Caco-2 (cell line): ENCODE measurements at regions of chr3 and their contacts with region 1.

Region 1: GRCh38 chr3:59049671-59050331 is at the start of gene CFAP20DC:
- DNase-seq: peak; percentile 92 to 93
- H3K4me3 ChIP-seq: peak within 1 kb of the TSS; percentile 74
- H3K4me3 Mint-ChIP-seq: peak within 1 kb of the TSS; percentile 54
- H3K27ac Mint-ChIP-seq: peak within 1 kb of the TSS; percentile 55
- H3K4me1 ChIP-seq: peaks cover 5% of the 10 kb centered on the region
- H3K4me1 Mint-ChIP-seq: no peaks in the 10 kb centered on the region
- H3K27me3 ChIP-seq: no peaks in the 10 kb centered on the region; the same call in 1 of the 2 replicates
- H3K27me3 Mint-ChIP-seq: no peaks in the 10 kb centered on the region
- CTCF ChIP-seq: no peak
- total RNA-seq, gene CFAP20DC: 2.2 and 2.8 TPM in 2 replicates

Region 2: GRCh38 chr3:58560771-58561311 is 489.0 kb before region 1 on chr3:
- CTCF ChIA-PET with region 1: no interaction called
- POLR2A ChIA-PET with region 1: no interaction called
- intact Hi-C with region 1: loop called (anchors 5 kb)
- DNase-seq: peak; percentile 86
- H3K4me3 ChIP-seq: no peak overlapping the region
- H3K4me3 Mint-ChIP-seq: peak overlapping the region; percentile 33
- H3K27ac Mint-ChIP-seq: peak overlapping the region; percentile 91
- H3K4me1 ChIP-seq: peaks cover 42% of the 10 kb centered on the region
- H3K4me1 Mint-ChIP-seq: peaks cover 38% of the 10 kb centered on the region
- H3K27me3 ChIP-seq: no peaks in the 10 kb centered on the region
- H3K27me3 Mint-ChIP-seq: no peaks in the 10 kb centered on the region
- CTCF ChIP-seq: peak; percentile 43 to 51

Region 3: GRCh38 chr3:58824285-58824684 is 225.5 kb before region 1 on chr3:
- CTCF ChIA-PET with region 1: interaction called, 6 read pairs
- POLR2A ChIA-PET with region 1: no interaction called
- intact Hi-C with region 1: loop called (anchors 1 kb)
- DNase-seq: peak; percentile 47 to 48
- H3K4me3 ChIP-seq: no peak overlapping the region
- H3K4me3 Mint-ChIP-seq: no peak overlapping the region
- H3K27ac Mint-ChIP-seq: no peak overlapping the region
- H3K4me1 ChIP-seq: no peaks in the 10 kb centered on the region; the same call in 1 of the 2 replicates
- H3K4me1 Mint-ChIP-seq: peaks cover 6% of the 10 kb centered on the region
- H3K27me3 ChIP-seq: no peaks in the 10 kb centered on the region
- H3K27me3 Mint-ChIP-seq: peaks cover 2% of the 10 kb centered on the region
- CTCF ChIP-seq: peak; percentile 43 to 56

Region 4: GRCh38 chr3:58962816-58963215 is 87.0 kb before region 1 on chr3:
- CTCF ChIA-PET with region 1: no interaction called
- POLR2A ChIA-PET with region 1: no interaction called
- intact Hi-C with region 1: no loop called
- DNase-seq: no peak
- H3K4me3 ChIP-seq: no peak overlapping the region
- H3K4me3 Mint-ChIP-seq: no peak overlapping the region
- H3K27ac Mint-ChIP-seq: no peak overlapping the region
- H3K4me1 ChIP-seq: no peaks in the 10 kb centered on the region
- H3K4me1 Mint-ChIP-seq: no peaks in the 10 kb centered on the region
- H3K27me3 ChIP-seq: no peaks in the 10 kb centered on the region
- H3K27me3 Mint-ChIP-seq: no peaks in the 10 kb centered on the region
- CTCF ChIP-seq: no peak

Region 5: GRCh38 chr3:58994746-58995330 is 55.0 kb before region 1 on chr3:
- CTCF ChIA-PET with region 1: interaction called, 8 read pairs
- POLR2A ChIA-PET with region 1: no interaction called
- intact Hi-C with region 1: loop called (anchors 1 kb)
- DNase-seq: peak; percentile 43 to 63
- H3K4me3 ChIP-seq: no peak overlapping the region
- H3K4me3 Mint-ChIP-seq: no peak overlapping the region
- H3K27ac Mint-ChIP-seq: no peak overlapping the region
- H3K4me1 ChIP-seq: no peaks in the 10 kb centered on the region
- H3K4me1 Mint-ChIP-seq: no peaks in the 10 kb centered on the region
- H3K27me3 ChIP-seq: no peaks in the 10 kb centered on the region
- H3K27me3 Mint-ChIP-seq: no peaks in the 10 kb centered on the region
- CTCF ChIP-seq: peak; percentile 63 to 80